Breast epithelium (tissue), 4 donors: ENCODE measurements at regions of chr17 and their contacts with region 1.

Region 1: GRCh38 chr17:68749349-68750207 is 148.4 kb upstream of the FAM20A start:
- DNase-seq: no peak
- H3K4me3 ChIP-seq: peak overlapping the region in 1 of 3 donors; percentile 3
- H3K27ac ChIP-seq: peak overlapping the region in 1 of 2 donors; percentile 70
- H3K4me1 ChIP-seq: no peaks in the 10 kb centered on the region
- H3K27me3 ChIP-seq: no peaks in the 10 kb centered on the region
- CTCF ChIP-seq: no peak
- POLR2A ChIP-seq: no peak

Region 2: DNA sequence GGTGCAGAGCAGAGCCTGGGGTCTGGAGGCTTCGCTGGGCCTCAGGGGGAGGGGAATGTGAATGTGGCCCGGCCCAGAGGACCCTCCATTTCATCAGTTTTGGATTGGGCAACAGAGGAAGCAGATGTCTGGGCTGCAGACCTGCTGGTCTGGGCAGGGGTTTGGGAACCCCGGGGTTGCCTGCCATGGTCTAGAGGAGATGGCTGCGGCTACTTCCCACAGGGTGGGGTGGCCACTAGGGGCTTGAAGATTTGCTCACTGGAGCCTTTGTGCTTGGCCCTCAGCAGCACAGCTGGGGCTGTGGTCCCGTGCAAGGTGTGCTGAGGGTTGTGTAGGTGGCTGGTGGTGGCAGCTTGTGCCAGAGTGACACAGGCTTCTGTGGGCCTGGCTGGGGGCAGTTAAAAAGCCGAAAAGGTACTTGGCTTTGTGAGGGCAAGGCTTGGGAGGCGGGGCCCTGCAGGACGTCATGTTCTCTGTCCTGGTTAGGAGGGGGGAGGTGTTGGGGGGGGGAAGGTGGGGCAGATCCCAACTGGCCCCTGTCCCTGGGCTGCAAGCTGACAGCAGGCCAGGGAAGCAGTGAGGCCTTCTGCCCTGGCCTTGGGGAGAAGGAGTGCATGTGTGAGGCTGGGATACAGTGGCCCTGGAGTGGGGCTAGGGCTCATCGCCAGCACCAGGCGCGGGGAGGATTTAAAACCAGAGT is 616.1 kb before region 1 on chr17:
- intact Hi-C with region 1: no loop called
- DNase-seq: no peak
- H3K4me3 ChIP-seq: no peak overlapping the region
- H3K27ac ChIP-seq: no peak overlapping the region
- H3K4me1 ChIP-seq: no peaks in the 10 kb centered on the region
- H3K27me3 ChIP-seq: no peaks in the 10 kb centered on the region
- CTCF ChIP-seq: no peak
- POLR2A ChIP-seq: no peak

Region 3: DNA sequence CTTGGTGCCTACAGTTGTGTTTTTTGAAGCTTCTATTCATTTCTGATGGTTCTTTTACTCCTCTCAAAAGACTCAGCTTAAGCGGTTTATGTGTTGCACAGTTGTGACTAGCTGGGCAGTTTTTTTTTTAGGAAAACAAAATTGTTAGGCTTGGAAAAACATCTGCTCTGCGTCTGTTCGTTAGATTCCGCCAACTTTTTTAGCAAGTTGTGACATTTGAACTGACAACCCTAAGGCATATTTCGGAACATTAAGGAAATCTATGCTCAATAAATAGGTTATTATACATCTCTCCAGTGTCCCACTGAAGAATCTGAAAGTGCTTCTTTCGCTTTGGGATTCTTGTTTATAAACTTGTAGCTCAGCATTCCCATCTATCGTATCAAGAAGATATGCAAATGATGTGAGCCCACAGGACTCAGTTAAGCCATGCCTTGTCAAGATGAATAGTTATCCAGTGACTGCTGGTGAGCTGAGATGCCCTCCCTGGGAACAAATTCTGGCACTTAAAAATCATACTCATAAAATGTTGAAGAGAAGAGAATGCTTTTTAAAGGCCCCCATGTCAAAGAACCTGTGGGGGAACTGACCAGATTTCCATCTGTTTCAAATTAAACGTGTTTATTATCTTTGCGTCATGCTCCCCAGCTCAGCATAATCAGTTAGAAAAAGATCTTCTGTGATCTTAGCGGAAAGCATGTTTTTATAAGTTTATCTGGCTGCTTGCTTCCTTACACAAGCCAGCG is 39.4 kb before region 1 on chr17:
- intact Hi-C with region 1: loop called (anchors 5 kb)
- DNase-seq: no peak
- H3K4me3 ChIP-seq: peak overlapping the region in 1 of 3 donors; percentile 46
- H3K27ac ChIP-seq: peak overlapping the region; percentile 74 to 84
- H3K4me1 ChIP-seq: no peaks in the 10 kb centered on the region
- H3K27me3 ChIP-seq: no peaks in the 10 kb centered on the region
- CTCF ChIP-seq: no peak
- POLR2A ChIP-seq: no peak